Endothelial cell of umbilical vein (primary cell): ENCODE measurements at regions of chr22 and their contacts with region 1.

Region 1: DNA sequence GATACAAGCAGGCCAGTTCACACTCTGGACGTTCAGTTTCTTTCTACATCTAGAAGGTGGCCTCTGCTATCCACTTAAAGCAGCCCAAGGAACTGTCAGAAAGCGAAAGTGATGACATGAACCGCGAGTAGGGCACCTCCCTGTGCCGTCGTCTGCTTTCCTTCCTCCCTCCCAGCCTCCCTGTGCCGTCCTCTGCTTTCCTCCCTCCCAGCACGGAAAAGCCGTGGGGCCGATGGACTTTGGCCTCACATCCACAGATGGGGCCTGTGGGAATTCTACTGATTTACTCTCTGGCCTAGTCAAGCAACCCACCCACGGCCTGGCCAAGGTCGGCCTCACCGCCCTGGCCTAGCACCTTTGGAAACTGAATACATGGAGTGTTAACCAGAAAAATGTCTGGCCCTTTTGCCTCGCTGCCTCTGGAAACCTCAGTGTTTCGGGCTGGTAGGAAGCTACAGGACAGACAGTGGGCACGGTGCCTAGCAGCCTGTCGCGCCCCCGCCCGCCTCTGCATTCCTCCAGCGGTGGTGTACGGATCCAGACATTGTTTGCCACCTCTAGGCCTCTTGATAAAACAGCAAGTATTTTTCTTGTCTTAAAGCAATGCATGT is 14.2 kb downstream of the PEX26 start:
- DNase-seq: peak; percentile 89
- H3K4me3 ChIP-seq: peak overlapping the region; percentile 9 to 44 (median 21)
- H3K27ac ChIP-seq: peak overlapping the region; percentile 92
- H3K4me1 ChIP-seq: peaks cover 14% of the 10 kb centered on the region
- H3K27me3 ChIP-seq: no peaks in the 10 kb centered on the region
- CTCF ChIP-seq: peak; percentile 15 to 17
- POLR2A ChIP-seq: peak; percentile 37

Region 2: GRCh38 chr22:17830043-17830961 is 261.7 kb before region 1 on chr22:
- CTCF ChIA-PET with region 1: interaction called, 6 read pairs
- POLR2A ChIA-PET with region 1: no interaction called
- dilution Hi-C with region 1: no loop called
- intact Hi-C with region 1: loop called (anchors 5 kb)
- DNase-seq: peak; percentile 82
- H3K4me3 ChIP-seq: no peak overlapping the region
- H3K27ac ChIP-seq: no peak overlapping the region
- H3K4me1 ChIP-seq: no peaks in the 10 kb centered on the region
- H3K27me3 ChIP-seq: no peaks in the 10 kb centered on the region
- CTCF ChIP-seq: peak; percentile 97
- POLR2A ChIP-seq: no peak

Region 3: GRCh38 chr22:18136563-18137320 is 44.7 kb after region 1 on chr22:
- CTCF ChIA-PET with region 1: no interaction called
- POLR2A ChIA-PET with region 1: no interaction called
- dilution Hi-C with region 1: no loop called
- intact Hi-C with region 1: loop called (anchors 5 kb)
- DNase-seq: no peak
- H3K4me3 ChIP-seq: no peak overlapping the region
- H3K27ac ChIP-seq: no peak overlapping the region
- H3K4me1 ChIP-seq: peaks cover 22% of the 10 kb centered on the region
- H3K27me3 ChIP-seq: no peaks in the 10 kb centered on the region
- CTCF ChIP-seq: no peak
- POLR2A ChIP-seq: no peak

Region 4: GRCh38 chr22:18156850-18157713 is 65.1 kb after region 1 on chr22:
- CTCF ChIA-PET with region 1: no interaction called
- POLR2A ChIA-PET with region 1: no interaction called
- dilution Hi-C with region 1: no loop called
- intact Hi-C with region 1: loop called (anchors 2 kb)
- DNase-seq: peak; percentile 83
- H3K4me3 ChIP-seq: no peak overlapping the region
- H3K27ac ChIP-seq: peak overlapping the region; percentile 61
- H3K4me1 ChIP-seq: peaks cover 22% of the 10 kb centered on the region
- H3K27me3 ChIP-seq: no peaks in the 10 kb centered on the region
- CTCF ChIP-seq: peak; percentile 77 to 84
- POLR2A ChIP-seq: no peak